Dendritic cell treated with granulocyte-macrophage colony-stimulating factor and Interleukin-4, amounts not matched to agents 40 ng/mL and 50 ng/mL, for 4 days (primary cell): ENCODE measurements at regions of chr14 and their contacts with region 1.

Region 1: DNA sequence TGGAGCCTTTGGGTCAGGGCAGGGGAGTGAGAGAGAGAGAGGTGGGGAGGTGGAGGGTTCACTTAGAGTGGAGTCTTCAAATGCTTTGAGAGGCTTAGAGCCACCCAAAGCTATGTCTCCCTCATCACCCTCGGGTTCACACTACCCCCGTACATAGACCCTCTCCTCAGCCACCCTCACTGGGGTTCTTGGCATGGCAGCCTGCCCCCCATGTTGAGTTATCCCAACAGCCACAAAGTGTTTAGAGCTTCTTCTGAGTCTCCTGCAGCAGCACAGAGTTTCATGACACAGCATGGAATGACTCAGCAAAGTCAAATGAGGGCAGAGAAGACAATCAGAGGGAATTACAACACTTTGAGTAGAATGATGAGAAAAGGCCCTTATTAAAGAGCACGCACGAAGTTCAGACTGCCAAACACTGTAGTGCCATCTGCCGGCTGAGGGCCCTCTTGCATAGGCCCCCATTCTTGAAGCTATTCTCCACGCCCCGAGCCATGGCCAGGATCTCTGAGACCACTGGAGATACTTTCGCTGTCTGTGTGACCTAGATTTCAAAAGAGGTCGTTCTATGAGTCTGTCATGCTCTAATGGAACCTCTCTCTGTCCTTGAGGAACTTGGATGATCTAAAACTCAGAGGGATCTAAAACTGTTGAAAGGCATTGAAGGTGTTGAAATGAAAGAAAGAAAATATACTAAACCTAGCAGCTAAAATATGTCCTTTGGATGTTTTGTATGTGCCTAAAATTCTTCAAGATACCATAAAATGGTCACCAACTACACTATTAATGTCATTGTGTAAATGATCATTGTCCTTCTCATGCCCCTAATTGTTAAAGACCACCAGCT is 221.9 kb downstream of the PELI2 start:
- H3K4me3 Mint-ChIP-seq: no peak overlapping the region
- H3K27ac Mint-ChIP-seq: no peak overlapping the region
- H3K4me1 Mint-ChIP-seq: peaks cover 24% of the 10 kb centered on the region
- H3K27me3 Mint-ChIP-seq: no peaks in the 10 kb centered on the region

Region 2: GRCh38 chr14:55707365-55707804 is 632.7 kb before region 1 on chr14:
- intact Hi-C with region 1: loop called (anchors 1 kb)
- H3K4me3 Mint-ChIP-seq: no peak overlapping the region
- H3K27ac Mint-ChIP-seq: no peak overlapping the region
- H3K4me1 Mint-ChIP-seq: peaks cover 20% of the 10 kb centered on the region
- H3K27me3 Mint-ChIP-seq: no peaks in the 10 kb centered on the region

Region 3: DNA sequence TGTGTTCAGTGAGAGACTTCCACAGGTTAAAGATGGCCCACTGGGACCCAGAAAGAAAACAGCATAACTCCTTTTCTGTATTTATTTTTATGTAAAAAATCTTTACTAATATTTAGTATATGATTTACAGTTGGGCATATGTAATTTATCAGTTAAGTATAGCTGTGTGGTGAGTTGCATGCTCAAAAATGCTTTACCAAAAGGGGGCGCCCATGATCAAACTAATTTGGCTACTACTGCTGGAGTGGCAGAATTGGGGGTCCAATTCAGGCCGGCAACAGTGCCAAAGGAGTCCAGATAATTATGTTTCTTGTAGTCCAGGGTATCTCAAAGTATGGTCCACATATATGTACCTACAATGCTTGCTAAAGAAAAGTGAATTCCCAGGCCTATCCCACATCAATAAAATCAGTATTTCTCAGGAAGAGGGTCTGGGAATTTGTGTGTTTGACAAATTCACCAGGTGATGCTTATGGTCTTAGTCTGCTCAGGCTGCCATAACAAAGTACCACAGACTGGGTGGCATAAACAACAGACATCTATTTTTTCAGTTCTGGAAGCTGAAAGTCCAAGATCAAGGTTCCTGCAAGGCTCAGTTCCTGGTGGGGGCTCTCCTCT is 608.1 kb before region 1 on chr14:
- intact Hi-C with region 1: loop called (anchors 1 kb)
- H3K4me3 Mint-ChIP-seq: no peak overlapping the region
- H3K27ac Mint-ChIP-seq: no peak overlapping the region
- H3K4me1 Mint-ChIP-seq: peaks cover 5% of the 10 kb centered on the region
- H3K27me3 Mint-ChIP-seq: no peaks in the 10 kb centered on the region

Region 4: DNA sequence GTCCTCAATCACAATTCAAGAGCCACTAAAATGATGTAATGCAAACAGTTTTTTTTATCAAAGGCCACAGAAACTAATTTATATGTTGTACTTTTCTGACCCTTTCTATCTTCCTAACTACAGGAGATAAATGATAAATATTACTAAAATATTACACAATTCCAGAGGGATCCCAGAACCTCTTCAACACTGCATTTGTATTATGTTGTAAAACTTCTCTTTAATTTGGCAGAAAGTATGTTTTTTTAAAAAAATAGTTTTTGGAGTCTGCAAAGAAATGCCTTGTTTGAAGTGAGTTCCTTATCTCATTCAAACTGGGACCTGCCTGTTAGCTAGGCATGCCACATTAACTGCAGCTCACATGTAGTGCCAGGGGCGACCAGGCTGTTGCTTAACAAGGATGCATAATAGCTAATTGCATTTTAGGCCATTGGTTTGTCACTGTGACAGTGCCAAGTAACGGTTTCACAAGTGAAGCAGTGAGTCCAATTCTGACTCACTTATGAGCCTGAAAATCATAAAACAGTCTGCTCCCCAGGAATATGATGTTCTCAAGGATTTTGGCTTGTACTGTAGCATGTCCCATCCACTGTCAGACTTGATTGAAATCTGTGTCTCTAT is 493.1 kb before region 1 on chr14:
- intact Hi-C with region 1: loop called (anchors 10 kb)
- H3K4me3 Mint-ChIP-seq: no peak overlapping the region
- H3K27ac Mint-ChIP-seq: no peak overlapping the region
- H3K4me1 Mint-ChIP-seq: no peaks in the 10 kb centered on the region
- H3K27me3 Mint-ChIP-seq: peaks cover 9% of the 10 kb centered on the region

Region 5: GRCh38 chr14:56324856-56325699 is 15.0 kb before region 1 on chr14:
- intact Hi-C with region 1: no loop called
- H3K4me3 Mint-ChIP-seq: no peak overlapping the region
- H3K27ac Mint-ChIP-seq: no peak overlapping the region
- H3K4me1 Mint-ChIP-seq: peaks cover 5% of the 10 kb centered on the region
- H3K27me3 Mint-ChIP-seq: no peaks in the 10 kb centered on the region

Region 6: DNA sequence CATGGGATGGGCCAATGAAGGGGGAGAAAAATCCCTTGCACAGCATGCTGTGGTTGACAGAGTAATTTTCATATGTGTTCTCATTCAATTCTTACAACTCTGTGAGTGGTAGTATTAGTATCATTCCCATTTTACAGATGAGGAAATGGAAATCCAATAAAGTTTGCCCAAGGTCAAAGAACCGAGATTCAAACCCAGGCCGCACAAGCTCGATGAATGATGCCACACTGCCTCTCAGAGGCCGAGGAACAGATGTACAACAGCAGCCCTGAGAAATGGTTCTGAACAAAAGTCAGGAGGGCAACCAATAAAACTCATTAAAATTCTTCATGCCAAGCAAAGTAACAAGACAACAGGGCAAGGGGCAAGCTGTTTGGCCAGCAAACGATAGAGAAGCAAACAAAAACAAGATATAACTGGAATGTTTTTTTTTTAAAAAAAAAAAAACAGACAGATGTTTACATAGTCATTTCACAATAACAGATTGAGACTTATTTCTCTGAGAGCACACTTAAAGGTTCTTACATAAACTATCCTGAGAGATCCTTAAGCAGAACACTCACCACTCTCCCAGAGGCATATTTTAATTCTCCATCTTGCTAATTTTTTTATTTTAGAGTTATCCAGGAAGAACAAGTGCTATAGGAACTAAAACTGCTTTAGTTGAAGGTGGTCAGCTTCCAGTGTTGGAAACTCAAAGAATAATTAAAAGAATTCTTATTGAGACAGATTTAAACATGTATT is 842.9 kb after region 1 on chr14:
- intact Hi-C with region 1: no loop called
- H3K4me3 Mint-ChIP-seq: no peak overlapping the region
- H3K27ac Mint-ChIP-seq: no peak overlapping the region
- H3K4me1 Mint-ChIP-seq: no peaks in the 10 kb centered on the region
- H3K27me3 Mint-ChIP-seq: peaks cover 14% of the 10 kb centered on the region